Ascending aorta (tissue), 2 donors: ENCODE measurements at regions of chr19 and their contacts with region 1.

Region 1: GRCh38 chr19:11374433-11375142 is at the start of gene SWSAP1:
- DNase-seq: peak; percentile 98 to 99
- H3K4me3 ChIP-seq: peak within 1 kb of the TSS; percentile 64 to 65
- H3K27ac ChIP-seq: peak within 1 kb of the TSS; percentile 93 to 94
- H3K4me1 ChIP-seq: peaks cover 3 to 39% of the 10 kb centered on the region in 2 donors
- H3K27me3 ChIP-seq: no peaks in the 10 kb centered on the region
- CTCF ChIP-seq: no peak
- total RNA-seq, gene SWSAP1: 4.5 TPM

Region 2: GRCh38 chr19:11256189-11256588 is 118.4 kb before region 1 on chr19:
- intact Hi-C with region 1: no loop called
- DNase-seq: no peak
- H3K4me3 ChIP-seq: no peak overlapping the region
- H3K27ac ChIP-seq: no peak overlapping the region
- H3K4me1 ChIP-seq: no peaks in the 10 kb centered on the region
- H3K27me3 ChIP-seq: no peaks in the 10 kb centered on the region
- CTCF ChIP-seq: no peak

Region 3: DNA sequence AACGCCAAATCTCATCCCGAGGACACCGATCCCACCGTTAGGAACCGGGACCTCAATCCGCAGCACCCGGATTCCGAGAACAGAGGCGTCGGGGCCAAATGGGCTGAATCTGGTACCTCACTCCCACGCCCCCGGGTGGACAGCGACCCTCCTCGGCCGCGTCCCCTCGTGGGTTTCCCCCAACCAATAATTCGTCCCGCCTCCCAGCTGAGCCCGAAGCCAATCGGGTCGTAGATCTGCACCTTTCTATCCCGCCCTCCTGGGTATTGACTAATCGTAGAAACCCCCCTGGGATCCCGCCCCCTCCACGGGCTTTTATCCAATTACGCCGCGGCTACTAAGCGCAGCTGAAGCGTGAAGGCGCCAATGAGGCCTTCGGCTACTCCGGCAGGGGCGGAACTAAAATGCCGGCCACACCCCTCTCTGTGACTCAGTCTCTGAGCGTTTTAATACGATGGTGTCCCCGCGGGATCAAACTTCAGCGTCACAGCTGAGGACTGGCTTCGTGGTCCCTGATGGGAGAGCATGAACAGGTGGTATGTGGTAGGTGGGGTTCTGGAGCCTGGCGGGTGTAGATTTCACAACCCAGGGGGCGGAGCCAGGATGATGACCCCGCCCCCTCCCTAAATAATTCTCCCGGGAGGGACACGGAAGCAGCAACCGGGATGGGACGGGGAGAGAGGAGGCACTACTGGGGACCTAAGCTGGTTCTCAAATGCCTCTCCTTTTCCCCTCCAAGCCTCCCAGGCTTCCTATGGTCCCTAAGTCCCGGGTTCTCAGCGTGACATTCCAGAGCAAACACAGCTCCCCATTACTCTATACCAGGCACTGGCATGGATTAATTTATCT is 28.3 kb before region 1 on chr19 and contains the starts of genes CCDC159 and TMEM205:
- intact Hi-C with region 1: loop called (anchors 1 kb)
- DNase-seq: peak; percentile 98 to 100
- H3K4me3 ChIP-seq: peak within 1 kb of the TSS; percentile 65 to 92
- H3K27ac ChIP-seq: peak within 1 kb of the TSS; percentile 79 to 94
- H3K4me1 ChIP-seq: peaks cover 11 to 17% of the 10 kb centered on the region in 2 donors
- H3K27me3 ChIP-seq: no peaks in the 10 kb centered on the region
- CTCF ChIP-seq: no peak
- total RNA-seq, gene CCDC159: 79.0 TPM
- total RNA-seq, gene TMEM205: 225 TPM

Region 4: GRCh38 chr19:11463391-11463790 is 88.8 kb after region 1 on chr19:
- intact Hi-C with region 1: no loop called
- DNase-seq: no peak
- H3K4me3 ChIP-seq: no peak overlapping the region
- H3K27ac ChIP-seq: no peak overlapping the region
- H3K4me1 ChIP-seq: no peaks in the 10 kb centered on the region
- H3K27me3 ChIP-seq: no peaks in the 10 kb centered on the region
- CTCF ChIP-seq: no peak

Region 5: DNA sequence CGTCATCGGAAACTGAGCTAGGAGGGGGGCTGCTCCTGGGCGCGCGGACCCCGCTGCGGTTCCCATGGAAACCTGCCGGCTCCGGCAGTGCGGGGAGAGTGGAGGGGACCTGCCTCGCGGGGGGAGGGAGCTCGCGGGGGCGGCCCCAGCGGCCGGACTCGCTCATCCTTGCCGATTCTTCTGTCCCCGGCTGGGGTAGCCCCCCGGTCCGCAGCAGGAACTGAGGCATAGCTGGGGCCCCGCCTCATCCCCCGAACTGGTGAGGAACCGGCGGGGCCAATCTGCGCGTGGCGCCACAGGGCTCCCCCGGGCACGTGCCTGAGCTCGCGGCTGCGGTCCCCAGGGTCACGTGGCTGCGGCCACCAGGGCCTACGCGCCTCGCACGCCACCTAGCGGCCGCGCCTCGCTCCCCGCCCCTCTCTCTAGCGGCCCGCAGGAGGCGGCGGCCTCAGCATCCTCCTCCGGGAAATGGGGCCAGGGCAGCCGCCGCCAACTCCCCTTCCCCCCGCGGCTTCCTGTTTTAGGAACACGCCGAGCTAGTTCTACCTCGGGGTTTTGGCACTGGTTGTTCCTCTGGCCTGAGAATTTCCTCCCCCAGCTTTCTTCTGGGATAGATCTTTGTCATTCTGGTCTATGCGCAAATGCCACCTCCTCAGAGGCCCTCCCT is 107.9 kb after region 1 on chr19:
- intact Hi-C with region 1: loop called (anchors 2 kb)
- DNase-seq: peak; percentile 49 to 87
- H3K4me3 ChIP-seq: peak overlapping the region; percentile 34 to 44
- H3K27ac ChIP-seq: no peak overlapping the region
- H3K4me1 ChIP-seq: peaks cover 3 to 9% of the 10 kb centered on the region in 2 donors
- H3K27me3 ChIP-seq: peaks cover 24% of the 10 kb centered on the region
- CTCF ChIP-seq: peak; percentile 84 to 96 (median 95)